ENCODE measurements at regions of chr19 and their contacts with region 1.

Region 1: DNA sequence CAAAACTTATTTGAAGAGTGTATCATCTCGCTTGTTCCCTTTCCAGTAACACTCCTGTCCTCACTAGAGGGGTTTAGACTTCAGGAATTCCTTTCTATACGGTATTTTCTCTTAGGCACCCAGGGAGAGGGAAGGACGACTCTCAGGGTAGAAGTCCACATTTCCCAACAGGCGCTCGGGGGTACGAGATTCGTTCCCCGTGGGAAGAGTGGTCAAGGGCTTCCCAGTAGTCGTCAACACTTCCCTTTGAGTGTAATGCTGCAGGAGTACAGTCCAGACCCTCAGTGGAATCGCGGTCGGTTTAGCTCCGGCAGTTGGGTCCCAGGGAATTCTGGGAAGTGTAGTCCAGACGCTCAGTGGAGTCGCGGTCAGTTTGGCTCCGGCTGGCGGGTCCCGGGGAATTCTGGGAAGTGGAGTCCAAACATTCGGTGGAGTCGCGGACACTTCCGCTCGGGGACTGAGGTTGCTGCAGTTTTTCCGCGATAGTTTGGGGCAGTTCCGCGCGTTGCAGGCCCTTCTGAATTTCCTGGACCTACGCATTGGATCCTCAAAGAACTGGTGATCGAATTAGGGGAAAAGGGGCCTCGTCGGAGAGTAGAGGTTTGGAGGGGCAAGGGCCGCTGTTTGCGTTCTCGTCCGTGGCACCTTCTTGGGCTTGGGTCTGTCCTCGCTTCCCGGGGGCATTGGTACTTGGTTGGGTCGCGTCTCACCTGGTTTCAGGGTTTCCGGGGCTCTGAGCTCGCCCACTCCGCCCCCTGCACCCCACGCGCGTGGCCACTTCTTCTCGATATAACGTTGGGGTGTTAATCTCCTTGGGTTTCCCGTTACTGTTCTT is at the start of gene ZNF224:
- DNase-seq: peak; percentile 73
- H3K4me3 Mint-ChIP-seq: peak within 1 kb of the TSS; percentile 98
- H3K27ac Mint-ChIP-seq: peak within 1 kb of the TSS; percentile 91
- H3K4me1 Mint-ChIP-seq: peaks cover 22% of the 10 kb centered on the region
- H3K27me3 Mint-ChIP-seq: no peaks in the 10 kb centered on the region
- total RNA-seq, gene ZNF224: 18.8 and 20.4 TPM in 2 replicates

Region 2: GRCh38 chr19:43408043-43408442 is 686.1 kb before region 1 on chr19:
- intact Hi-C with region 1: no loop called
- DNase-seq: no peak
- H3K4me3 Mint-ChIP-seq: no peak overlapping the region
- H3K27ac Mint-ChIP-seq: no peak overlapping the region
- H3K4me1 Mint-ChIP-seq: no peaks in the 10 kb centered on the region
- H3K27me3 Mint-ChIP-seq: peaks cover 1% of the 10 kb centered on the region

Region 3: DNA sequence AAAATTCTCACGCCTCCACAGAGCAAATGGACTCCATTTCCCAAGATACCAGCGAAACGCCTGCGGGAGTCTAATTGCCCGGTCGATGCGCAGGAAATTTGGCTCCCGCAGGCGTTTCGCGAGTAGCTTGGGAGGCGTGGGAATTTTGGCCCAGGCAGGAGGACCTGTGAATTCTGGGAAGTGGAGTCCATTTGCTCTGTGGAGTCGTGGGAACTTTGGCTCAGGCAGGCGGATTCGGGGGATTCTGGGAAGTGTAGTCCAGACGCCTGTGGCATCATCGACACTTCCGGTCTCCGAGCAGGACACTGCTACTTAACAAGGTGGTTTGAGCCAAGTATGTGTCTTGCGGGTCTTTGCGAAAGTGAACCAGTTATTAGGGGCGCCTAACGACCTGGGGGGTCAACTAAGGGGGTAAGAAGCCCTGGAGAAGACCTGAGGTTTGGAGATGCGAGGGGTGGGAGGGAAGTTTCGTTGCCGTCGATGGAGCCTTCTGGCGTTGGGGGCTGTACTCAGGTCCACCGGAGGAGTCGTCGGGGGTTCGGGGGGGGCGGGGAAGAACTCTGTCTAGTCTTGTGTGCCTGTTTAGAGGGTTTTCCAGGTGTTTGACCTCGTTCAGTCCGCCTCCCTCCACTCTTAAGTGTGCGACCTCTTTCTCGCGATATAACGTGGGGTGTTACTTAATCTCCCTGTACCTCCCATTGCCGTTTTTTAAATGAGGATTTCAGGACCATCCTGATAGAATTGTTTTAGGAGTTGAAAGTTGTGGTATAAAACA is 110.0 kb before region 1 on chr19 and contains the start of gene ZNF155:
- intact Hi-C with region 1: loop called (anchors 5 kb)
- DNase-seq: peak; percentile 56
- H3K4me3 Mint-ChIP-seq: peak within 1 kb of the TSS; percentile 94
- H3K27ac Mint-ChIP-seq: peak within 1 kb of the TSS; percentile 88
- H3K4me1 Mint-ChIP-seq: peaks cover 8% of the 10 kb centered on the region
- H3K27me3 Mint-ChIP-seq: no peaks in the 10 kb centered on the region
- total RNA-seq, gene ZNF155: 5.2 and 6.5 TPM in 2 replicates

Region 4: DNA sequence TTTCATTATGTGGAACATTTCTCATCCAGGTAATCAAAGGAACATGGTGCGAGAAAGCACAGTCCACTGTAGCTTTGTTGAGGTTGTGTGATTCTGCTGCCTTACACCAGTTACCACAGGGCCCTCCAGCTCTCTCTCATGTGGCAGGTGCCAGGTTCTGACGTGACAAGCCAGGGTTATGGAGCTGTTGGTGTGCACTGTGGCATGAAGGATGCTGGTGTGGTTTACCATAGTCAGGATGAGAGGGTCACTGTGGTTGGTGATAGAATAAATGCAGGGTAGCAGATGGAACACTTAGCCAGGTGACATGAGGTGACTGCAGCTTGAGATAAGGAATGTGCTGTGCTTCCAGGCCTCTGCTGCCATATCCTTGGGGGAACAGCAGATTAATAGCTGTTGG is 34.9 kb before region 1 on chr19:
- intact Hi-C with region 1: no loop called
- DNase-seq: no peak
- H3K4me3 Mint-ChIP-seq: no peak overlapping the region
- H3K27ac Mint-ChIP-seq: no peak overlapping the region
- H3K4me1 Mint-ChIP-seq: no peaks in the 10 kb centered on the region
- H3K27me3 Mint-ChIP-seq: no peaks in the 10 kb centered on the region

Region 5: DNA sequence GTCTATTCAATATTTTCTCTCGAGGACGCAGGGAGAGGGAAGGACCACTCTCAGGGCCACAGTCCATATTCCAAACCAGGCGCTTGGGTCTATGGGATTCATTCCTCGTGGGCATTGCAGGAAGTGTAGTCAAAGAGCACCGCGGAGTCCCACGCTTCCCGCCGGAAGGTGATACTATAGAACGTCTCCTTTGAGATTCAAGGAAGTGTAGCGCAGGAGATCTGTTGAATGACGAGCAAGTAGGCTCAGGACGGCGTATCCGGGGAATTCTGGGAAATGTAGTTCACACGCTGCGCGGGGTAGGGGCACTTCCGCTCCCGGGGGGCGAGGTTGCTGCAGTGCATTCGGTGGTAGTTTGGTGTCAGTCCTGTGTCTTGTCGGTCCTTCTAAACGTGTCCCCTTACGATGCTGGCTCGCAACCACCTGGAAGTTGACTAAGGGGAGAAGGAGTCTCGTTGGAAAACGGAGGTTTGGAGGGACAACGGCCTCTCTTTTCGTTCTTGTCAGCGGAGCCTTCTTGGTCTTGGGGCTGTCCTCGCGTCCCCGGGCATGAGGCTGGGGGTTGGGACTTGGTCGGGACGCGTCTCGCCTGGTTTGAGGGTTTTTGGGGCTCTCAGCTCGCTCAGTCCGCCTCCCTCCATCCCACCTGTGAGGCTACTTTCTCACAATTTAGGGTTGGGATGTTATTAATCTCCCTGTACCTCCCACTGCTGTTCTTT is 22.2 kb before region 1 on chr19 and contains the start of gene ZNF284:
- intact Hi-C with region 1: loop called (anchors 1 kb)
- DNase-seq: peak; percentile 74
- H3K4me3 Mint-ChIP-seq: peak within 1 kb of the TSS; percentile 86
- H3K27ac Mint-ChIP-seq: peak within 1 kb of the TSS; percentile 79
- H3K4me1 Mint-ChIP-seq: peaks cover 17% of the 10 kb centered on the region
- H3K27me3 Mint-ChIP-seq: no peaks in the 10 kb centered on the region
- total RNA-seq, gene ZNF284: 1.3 and 1.4 TPM in 2 replicates

Region 6: DNA sequence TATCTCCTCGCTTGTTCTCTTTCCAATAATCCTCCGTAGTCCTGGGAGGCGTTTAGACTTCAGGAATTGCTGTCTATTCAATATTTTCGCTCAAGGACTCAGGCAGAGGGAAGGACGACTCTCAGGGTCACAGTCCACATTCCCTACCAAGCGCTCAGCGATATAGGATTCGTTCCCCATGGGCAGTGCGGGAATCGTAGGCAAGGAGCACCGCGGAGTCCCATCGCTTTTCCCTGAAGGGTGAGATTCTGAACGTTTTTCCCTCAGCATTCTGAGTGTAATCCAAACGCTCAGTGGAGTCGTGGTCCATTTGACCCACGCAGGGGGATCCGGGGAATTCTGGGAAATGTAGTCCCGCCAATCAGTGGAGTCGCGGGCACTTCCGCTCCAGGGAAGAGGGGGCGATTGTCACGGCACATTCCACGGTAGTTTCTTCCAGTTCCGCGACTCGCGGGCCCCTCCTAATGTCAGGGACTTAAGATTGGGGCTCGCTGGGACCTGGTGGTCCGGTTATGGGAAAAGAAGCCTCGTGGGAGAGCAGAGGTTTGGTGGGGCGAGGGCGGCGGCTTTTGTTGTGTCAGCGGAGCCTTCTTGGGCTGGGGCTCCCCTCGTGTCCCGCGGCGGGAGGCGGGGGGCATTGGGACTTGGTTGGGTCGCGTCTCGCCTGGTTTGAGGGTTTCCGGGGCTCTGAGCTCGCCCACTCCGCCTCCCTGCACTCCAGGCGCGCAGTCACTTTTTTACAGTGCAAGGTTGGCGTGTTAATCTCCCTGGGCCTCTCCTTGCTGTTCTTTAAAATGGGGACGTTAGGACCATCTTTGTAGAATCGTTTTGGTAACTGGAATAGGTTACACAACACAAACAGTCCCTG is 47.3 kb after region 1 on chr19 and contains the start of gene ZNF234:
- intact Hi-C with region 1: loop called (anchors 1 kb)
- DNase-seq: peak; percentile 52
- H3K4me3 Mint-ChIP-seq: peak within 1 kb of the TSS; percentile 93
- H3K27ac Mint-ChIP-seq: peak within 1 kb of the TSS; percentile 76
- H3K4me1 Mint-ChIP-seq: peaks cover 14% of the 10 kb centered on the region
- H3K27me3 Mint-ChIP-seq: no peaks in the 10 kb centered on the region
- total RNA-seq, gene ZNF234: 8.4 and 10.3 TPM in 2 replicates

Region 7: DNA sequence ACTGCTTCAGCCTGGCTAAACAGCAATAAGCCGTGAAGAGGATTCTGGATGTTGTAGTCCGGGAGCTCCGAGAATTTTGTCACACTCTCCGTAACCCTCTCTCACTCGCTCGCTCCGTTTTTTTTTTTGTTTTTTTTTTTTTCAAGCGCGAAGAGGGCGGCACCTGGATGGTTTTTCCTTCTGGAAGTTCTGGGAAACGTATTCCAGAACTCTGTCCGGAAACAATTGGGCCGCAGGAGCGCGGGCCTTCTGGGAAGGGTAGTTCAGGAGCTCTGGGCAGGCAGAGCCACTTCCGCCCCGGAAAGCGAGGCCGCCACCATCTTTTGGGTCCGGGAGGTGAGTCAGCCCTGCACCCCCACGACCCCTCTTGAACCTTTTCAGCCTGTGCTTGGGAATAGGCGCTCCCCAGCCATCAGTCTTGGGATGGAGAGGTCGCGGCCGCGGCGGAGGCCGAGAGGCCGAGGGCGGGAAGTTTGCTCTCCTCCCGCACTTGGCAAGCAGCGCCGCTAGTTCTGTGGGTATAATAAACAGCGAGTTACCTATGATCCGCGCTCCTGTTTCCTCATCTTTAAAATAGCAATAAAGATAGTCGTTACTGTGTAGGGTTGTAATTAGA is 118.2 kb after region 1 on chr19 and contains the start of gene ZNF227:
- intact Hi-C with region 1: loop called (anchors 2 kb)
- DNase-seq: peak; percentile 70
- H3K4me3 Mint-ChIP-seq: peak within 1 kb of the TSS; percentile 89
- H3K27ac Mint-ChIP-seq: peak within 1 kb of the TSS; percentile 79
- H3K4me1 Mint-ChIP-seq: peaks cover 27% of the 10 kb centered on the region
- H3K27me3 Mint-ChIP-seq: no peaks in the 10 kb centered on the region
- total RNA-seq, gene ZNF227: 21.7 and 22.6 TPM in 2 replicates

Measured in activated T-helper 1 cell treated with anti-CD3 and anti-CD28 coated beads, Interleukin-12 subunit alpha, Interleukin-12 subunit beta, Interleukin-2, Interleukin-4 antibody, amounts not matched to agents 30 ng/mL and 10 ng/mL and 1 ng/mL, durations not matched to agents 14 hours and 24 hours and 36 hours (primary cell).